ENCODE measurements at regions of chr6 and their contacts with region 1.

Region 1: GRCh38 chr6:5398530-5398929 is 137.2 kb downstream of the FARS2 start:
- DNase-seq: peak; percentile 52
- ATAC-seq: peak; percentile 100
- H3K4me3 Mint-ChIP-seq: no peak overlapping the region
- H3K27ac Mint-ChIP-seq: no peak overlapping the region
- H3K4me1 Mint-ChIP-seq: peaks cover 22% of the 10 kb centered on the region
- H3K27me3 Mint-ChIP-seq: no peaks in the 10 kb centered on the region

Region 2: GRCh38 chr6:4941782-4942672 is 456.5 kb before region 1 on chr6:
- CTCF ChIA-PET with region 1: no interaction called
- POLR2A ChIA-PET with region 1: no interaction called
- intact Hi-C with region 1: loop called in 1 of 2 experiments (anchors 1 kb)
- DNase-seq: peak; percentile 73
- ATAC-seq: peak; percentile 93
- H3K4me3 Mint-ChIP-seq: no peak overlapping the region
- H3K27ac Mint-ChIP-seq: peak overlapping the region; percentile 61
- H3K4me1 Mint-ChIP-seq: peaks cover 47% of the 10 kb centered on the region
- H3K27me3 Mint-ChIP-seq: no peaks in the 10 kb centered on the region

Region 3: DNA sequence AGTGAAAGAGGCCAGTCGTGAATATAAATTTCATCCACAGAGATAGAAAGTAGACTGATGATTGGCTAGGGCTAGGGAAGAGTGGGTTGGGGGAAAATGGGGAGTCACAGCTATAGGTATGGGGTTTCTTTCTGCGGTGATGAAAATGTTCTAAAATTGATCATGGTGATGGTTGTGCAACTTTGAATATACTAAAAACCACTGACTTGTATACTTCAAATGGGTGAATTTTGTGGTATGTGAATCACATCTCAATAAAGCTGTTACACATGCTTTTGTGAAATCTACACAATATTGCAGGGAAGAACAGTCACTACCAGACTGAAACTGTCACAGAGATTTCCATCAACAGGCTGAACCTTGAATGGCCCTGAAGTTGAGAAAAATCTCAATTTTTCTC is 199.2 kb before region 1 on chr6:
- CTCF ChIA-PET with region 1: no interaction called
- POLR2A ChIA-PET with region 1: no interaction called
- intact Hi-C with region 1: loop called in 1 of 2 experiments (anchors 1 kb)
- DNase-seq: peak; percentile 28
- ATAC-seq: peak; percentile 93
- H3K4me3 Mint-ChIP-seq: no peak overlapping the region
- H3K27ac Mint-ChIP-seq: no peak overlapping the region
- H3K4me1 Mint-ChIP-seq: peaks cover 32% of the 10 kb centered on the region
- H3K27me3 Mint-ChIP-seq: no peaks in the 10 kb centered on the region

Region 4: GRCh38 chr6:5260661-5261544 is 137.6 kb before region 1 on chr6 and contains the starts of genes FARS2 and LYRM4:
- CTCF ChIA-PET with region 1: interaction called, 5 read pairs
- POLR2A ChIA-PET with region 1: no interaction called
- intact Hi-C with region 1: loop called (anchors 2 to 5 kb)
- DNase-seq: peak; percentile 94
- ATAC-seq: peak; percentile 80
- H3K4me3 Mint-ChIP-seq: peak within 1 kb of the TSS; percentile 92
- H3K27ac Mint-ChIP-seq: peak within 1 kb of the TSS; percentile 97
- H3K4me1 Mint-ChIP-seq: peaks cover 36% of the 10 kb centered on the region
- H3K27me3 Mint-ChIP-seq: no peaks in the 10 kb centered on the region
- total RNA-seq, gene FARS2: 17.6 to 18.4 TPM
- total RNA-seq, gene LYRM4: 46.4 to 53.4 TPM

Region 5: DNA sequence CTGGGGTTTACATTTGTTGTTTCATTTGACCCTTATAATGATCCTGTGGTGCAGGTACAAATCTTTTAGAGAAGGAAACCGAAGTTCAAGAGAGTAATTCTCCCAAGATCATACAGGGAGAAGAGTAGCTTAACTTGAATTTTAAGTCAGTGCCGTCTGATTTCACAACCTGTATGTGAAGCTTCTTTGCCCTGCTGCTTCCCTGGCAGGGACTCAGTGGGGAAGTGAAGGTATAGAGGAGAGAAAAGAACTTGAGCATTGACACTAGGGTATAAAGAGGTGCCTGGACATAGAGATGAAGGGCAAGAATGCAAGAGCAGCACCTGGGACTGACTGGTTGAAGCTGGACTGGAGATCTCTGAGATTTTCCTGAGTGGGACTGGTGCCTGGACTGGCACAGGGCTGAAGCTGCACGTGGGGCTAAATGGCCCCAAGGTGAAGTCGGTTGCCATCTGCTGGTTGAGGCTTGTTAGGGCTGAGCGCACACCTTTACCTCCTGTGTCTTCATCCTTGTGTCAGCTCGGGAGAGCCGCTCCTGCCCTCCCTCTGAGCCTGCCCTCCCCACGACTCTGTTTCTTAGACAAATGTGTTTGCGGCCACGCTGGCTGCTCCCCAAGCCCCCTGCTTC is 95.4 kb before region 1 on chr6:
- CTCF ChIA-PET with region 1: no interaction called
- POLR2A ChIA-PET with region 1: no interaction called
- intact Hi-C with region 1: loop called in 1 of 2 experiments (anchors 1 kb)
- DNase-seq: peak; percentile 78
- ATAC-seq: peak; percentile 68
- H3K4me3 Mint-ChIP-seq: peak overlapping the region; percentile 43
- H3K27ac Mint-ChIP-seq: peak overlapping the region; percentile 84
- H3K4me1 Mint-ChIP-seq: peaks cover 54% of the 10 kb centered on the region
- H3K27me3 Mint-ChIP-seq: no peaks in the 10 kb centered on the region

Region 6: GRCh38 chr6:5566718-5567117 is 168.2 kb after region 1 on chr6:
- CTCF ChIA-PET with region 1: no interaction called
- POLR2A ChIA-PET with region 1: no interaction called
- intact Hi-C with region 1: no loop called
- DNase-seq: no peak
- ATAC-seq: no peak
- H3K4me3 Mint-ChIP-seq: no peak overlapping the region
- H3K27ac Mint-ChIP-seq: no peak overlapping the region
- H3K4me1 Mint-ChIP-seq: peaks cover 21% of the 10 kb centered on the region
- H3K27me3 Mint-ChIP-seq: no peaks in the 10 kb centered on the region

Measured in activated CD4-positive, alpha-beta T cell treated with anti-CD3 and anti-CD28 coated beads for 36 hours (primary cell).